Transverse colon (tissue), 4 donors: ENCODE measurements at regions of chr5 and their contacts with region 1.

Region 1: GRCh38 chr5:168486136-168486879 is at the start of gene RARS1:
- DNase-seq: peak; percentile 95
- H3K4me3 ChIP-seq: peak within 1 kb of the TSS; percentile 63 to 83 (median 83)
- H3K27ac ChIP-seq: peak within 1 kb of the TSS; percentile 72 to 85 (median 84)
- H3K4me1 ChIP-seq: peaks cover 2 to 14% (median 9%) of the 10 kb centered on the region in 4 donors
- H3K27me3 ChIP-seq: no peaks in the 10 kb centered on the region
- CTCF ChIP-seq: peak; percentile 91 to 96 (median 95)
- EP300 ChIP-seq: no peak
- POLR2A ChIP-seq: peak; percentile 88
- total RNA-seq, gene RARS1: 6.6 to 66.8 (median 41.9) TPM

Region 2: GRCh38 chr5:167861129-167861927 is 625.0 kb before region 1 on chr5:
- in situ Hi-C with region 1: no loop called
- intact Hi-C with region 1: loop called (anchors 10 kb)
- DNase-seq: no peak
- H3K4me3 ChIP-seq: no peak overlapping the region
- H3K27ac ChIP-seq: no peak overlapping the region
- H3K4me1 ChIP-seq: no peaks in the 10 kb centered on the region
- H3K27me3 ChIP-seq: no peaks in the 10 kb centered on the region
- CTCF ChIP-seq: no peak
- EP300 ChIP-seq: no peak
- POLR2A ChIP-seq: no peak

Region 3: DNA sequence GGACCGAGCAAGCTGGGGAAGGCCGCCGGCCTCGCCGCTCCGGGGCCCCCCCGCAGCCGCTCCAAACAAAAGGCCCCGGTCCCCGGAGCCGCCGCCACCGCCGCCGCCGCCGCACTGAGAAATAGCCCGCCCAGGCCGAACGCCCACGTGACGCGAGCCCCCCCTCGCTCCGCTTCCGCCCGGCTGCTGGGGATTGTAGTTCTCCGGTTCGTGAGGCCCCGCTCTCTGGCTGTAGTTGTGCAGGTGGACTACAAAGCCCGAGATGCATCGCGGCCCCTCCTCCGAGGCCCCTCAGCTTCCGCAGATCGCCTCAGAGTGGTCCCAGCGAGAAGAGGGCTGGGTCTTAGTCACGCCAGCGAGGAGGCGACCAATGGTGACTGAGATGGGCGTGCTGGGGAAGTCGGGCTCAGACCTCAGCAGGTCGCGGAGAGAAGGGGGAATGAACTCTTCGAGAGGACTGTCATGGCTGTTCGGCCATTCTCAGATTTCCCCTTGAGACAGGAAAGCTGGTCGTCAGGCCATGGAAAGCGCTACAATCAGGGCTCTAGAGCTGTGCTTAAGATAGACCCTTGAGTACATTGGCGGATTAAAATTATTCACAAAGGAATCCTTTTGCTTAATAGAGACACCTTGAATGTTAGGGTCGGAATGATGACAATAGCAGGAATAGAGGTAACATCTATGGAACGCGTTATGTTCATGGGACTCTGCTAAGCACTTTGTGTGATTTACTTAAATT is 93.3 kb after region 1 on chr5:
- in situ Hi-C with region 1: no loop called
- intact Hi-C with region 1: loop called (anchors 10 kb)
- DNase-seq: peak; percentile 98
- H3K4me3 ChIP-seq: peak overlapping the region; percentile 78 to 92 (median 88)
- H3K27ac ChIP-seq: peak overlapping the region; percentile 97 to 99 (median 98)
- H3K4me1 ChIP-seq: peaks cover 13 to 38% (median 28%) of the 10 kb centered on the region in 4 donors
- H3K27me3 ChIP-seq: no peaks in the 10 kb centered on the region
- CTCF ChIP-seq: no peak
- EP300 ChIP-seq: no peak
- POLR2A ChIP-seq: peak; percentile 91